HepG2 (cell line): ENCODE measurements at regions of chr13 and their contacts with region 1.

Region 1: GRCh38 chr13:51856027-51856736 is 5.6 kb upstream of the CCDC70 start:
- DNase-seq: no peak
- ATAC-seq: no peak
- H3K4me3 ChIP-seq: no peak overlapping the region
- H3K27ac ChIP-seq: no peak overlapping the region
- H3K4me1 ChIP-seq: peaks cover 28% of the 10 kb centered on the region
- H3K27me3 ChIP-seq: no peaks in the 10 kb centered on the region
- CTCF ChIP-seq: no peak
- EP300 ChIP-seq: no peak
- POLR2A ChIP-seq: no peak
- RAD21 ChIP-seq: no peak

Region 2: GRCh38 chr13:51015973-51016372 is 840.2 kb before region 1 on chr13:
- CTCF ChIA-PET with region 1: no interaction called
- POLR2A ChIA-PET with region 1: no interaction called
- in situ Hi-C with region 1: no loop called
- intact Hi-C with region 1: loop called (anchors 5 kb)
- DNase-seq: no peak
- ATAC-seq: no peak
- H3K4me3 ChIP-seq: no peak overlapping the region
- H3K27ac ChIP-seq: no peak overlapping the region
- H3K4me1 ChIP-seq: no peaks in the 10 kb centered on the region
- H3K27me3 ChIP-seq: peaks cover 0 to 6% of the 10 kb centered on the region in 2 experiments; a peak in 3 of 5 replicates
- CTCF ChIP-seq: no peak
- EP300 ChIP-seq: no peak
- POLR2A ChIP-seq: no peak
- RAD21 ChIP-seq: no peak

Region 3: GRCh38 chr13:51714663-51715168 is 141.5 kb before region 1 on chr13:
- CTCF ChIA-PET with region 1: no interaction called
- POLR2A ChIA-PET with region 1: no interaction called
- in situ Hi-C with region 1: no loop called
- intact Hi-C with region 1: no loop called
- DNase-seq: no peak
- ATAC-seq: peak; percentile 60
- H3K4me3 ChIP-seq: no peak overlapping the region
- H3K27ac ChIP-seq: no peak overlapping the region
- H3K4me1 ChIP-seq: no peaks in the 10 kb centered on the region
- H3K27me3 ChIP-seq: no peaks in the 10 kb centered on the region
- CTCF ChIP-seq: no peak
- EP300 ChIP-seq: no peak
- POLR2A ChIP-seq: no peak
- RAD21 ChIP-seq: no peak